PC-9 (cell line): ENCODE measurements at regions of chr11 and their contacts with region 1.

Region 1: GRCh38 chr11:27477831-27478230 is 5.2 kb upstream of the LGR4 start:
- DNase-seq: no peak
- H3K4me3 ChIP-seq: no peak overlapping the region
- H3K27ac ChIP-seq: no peak overlapping the region
- H3K4me1 ChIP-seq: peaks cover 7% of the 10 kb centered on the region
- H3K27me3 ChIP-seq: no peaks in the 10 kb centered on the region
- CTCF ChIP-seq: no peak

Region 2: GRCh38 chr11:27420722-27421572 is 56.9 kb before region 1 on chr11:
- CTCF ChIA-PET with region 1: no interaction called
- POLR2A ChIA-PET with region 1: interaction called, 30 read pairs
- intact Hi-C with region 1: no loop called
- DNase-seq: no peak
- H3K4me3 ChIP-seq: no peak overlapping the region
- H3K27ac ChIP-seq: 0 out of 2 replicates have a peak overlapping the region, but pooled peaks have one; percentile 0
- H3K4me1 ChIP-seq: peaks cover 46% of the 10 kb centered on the region
- H3K27me3 ChIP-seq: no peaks in the 10 kb centered on the region
- CTCF ChIP-seq: no peak